Naive thymus-derived CD4-positive, alpha-beta T cell (primary cell): ENCODE measurements at regions of chr2 and their contacts with region 1.

Region 1: GRCh38 chr2:203814661-203815540 is 52.7 kb upstream of the CTLA4 start:
- DNase-seq: peak in 7 of 9 donors; percentile 59 to 80 (median 68)
- ATAC-seq: peak; percentile 87
- H3K4me3 ChIP-seq: peak overlapping the region; percentile 24
- H3K4me3 Mint-ChIP-seq: peak overlapping the region; percentile 55 to 90 (median 80)
- H3K27ac ChIP-seq: no peak overlapping the region
- H3K27ac Mint-ChIP-seq: peak overlapping the region; percentile 16 to 92 (median 74)
- H3K4me1 ChIP-seq: peaks cover 23 to 30% of the 10 kb centered on the region in 2 donors
- H3K4me1 Mint-ChIP-seq: peaks cover 27 to 55% (median 52%) of the 10 kb centered on the region in 7 donors
- H3K27me3 ChIP-seq: no peaks in the 10 kb centered on the region
- H3K27me3 Mint-ChIP-seq: peaks cover 0 to 6% (median 0%) of the 10 kb centered on the region in 5 donors

Region 2: DNA sequence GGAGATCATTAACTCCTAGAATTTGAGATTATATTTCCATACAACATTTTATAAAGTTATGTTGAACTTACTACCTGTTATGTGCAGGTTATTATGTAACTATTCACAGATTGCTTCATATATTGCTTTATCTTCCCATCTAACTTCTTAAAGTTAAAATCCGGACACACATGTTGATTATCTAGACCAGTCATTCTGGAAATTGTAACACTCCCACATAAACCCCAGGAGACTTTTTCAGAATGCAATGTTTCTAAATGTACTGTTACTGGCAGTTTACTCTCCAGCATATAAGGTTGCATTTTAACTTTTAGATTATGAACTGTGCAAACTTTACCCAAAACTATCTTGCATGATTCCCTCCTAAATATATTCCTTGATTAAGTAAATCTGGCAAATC is 1250.7 kb before region 1 on chr2:
- CTCF ChIA-PET with region 1: no interaction called
- POLR2A ChIA-PET with region 1: no interaction called
- intact Hi-C with region 1: no loop called
- DNase-seq: no peak
- ATAC-seq: no peak
- H3K4me3 ChIP-seq: no peak overlapping the region
- H3K4me3 Mint-ChIP-seq: no peak overlapping the region
- H3K27ac ChIP-seq: no peak overlapping the region
- H3K27ac Mint-ChIP-seq: no peak overlapping the region
- H3K4me1 ChIP-seq: no peaks in the 10 kb centered on the region
- H3K4me1 Mint-ChIP-seq: no peaks in the 10 kb centered on the region
- H3K27me3 ChIP-seq: no peaks in the 10 kb centered on the region
- H3K27me3 Mint-ChIP-seq: no peaks in the 10 kb centered on the region

Region 3: DNA sequence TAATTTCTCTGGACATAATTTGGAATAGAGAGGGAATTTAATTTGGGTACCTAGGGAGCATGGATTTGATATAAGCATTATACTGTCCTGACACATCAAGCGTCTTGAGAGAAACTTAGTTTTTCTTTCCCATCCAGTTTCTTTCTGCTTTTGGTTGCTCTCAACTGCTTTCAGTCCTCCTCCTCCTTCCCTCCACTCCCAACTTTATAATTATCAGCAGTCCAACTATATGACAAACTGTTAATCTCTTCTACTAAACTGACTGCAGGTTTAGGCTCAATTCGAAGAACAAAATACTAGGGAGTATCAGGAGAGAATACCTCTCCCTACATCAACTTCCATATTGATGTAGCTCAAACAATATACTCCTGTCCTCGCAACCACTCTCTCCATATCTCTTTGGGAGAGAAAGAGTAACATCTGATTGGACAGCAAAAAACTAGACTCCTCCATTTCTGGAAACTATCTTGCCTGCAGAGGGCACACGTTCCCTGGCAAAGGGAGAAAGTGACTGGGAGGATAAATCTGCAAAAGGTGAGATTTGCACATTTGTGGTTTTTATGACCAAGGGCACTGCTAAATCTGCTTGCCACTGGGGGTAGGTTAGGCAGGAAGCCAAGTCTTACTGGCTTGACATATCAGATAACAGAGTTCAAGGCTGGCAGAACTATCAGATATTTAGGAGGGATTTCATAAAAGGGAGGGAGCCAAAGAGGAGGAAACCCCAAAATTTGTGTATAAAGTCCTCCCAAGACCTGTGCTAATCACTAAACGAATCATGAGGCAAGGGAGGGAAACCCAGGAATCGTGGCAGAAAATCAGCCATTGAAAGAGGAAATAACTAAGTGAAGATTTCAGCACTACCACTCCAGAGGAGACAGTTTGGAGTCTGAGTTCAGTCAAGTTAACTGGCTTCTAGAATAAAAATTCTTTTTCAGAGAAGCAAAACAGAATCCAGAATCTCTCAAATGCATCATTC is 983.4 kb before region 1 on chr2:
- CTCF ChIA-PET with region 1: no interaction called
- POLR2A ChIA-PET with region 1: no interaction called
- intact Hi-C with region 1: loop called (anchors 5 to 10 kb)
- DNase-seq: peak in 8 of 9 donors; percentile 10 to 56 (median 46)
- ATAC-seq: peak; percentile 80
- H3K4me3 ChIP-seq: no peak overlapping the region
- H3K4me3 Mint-ChIP-seq: peak overlapping the region in 8 of 10 donors; percentile 11 to 71 (median 38)
- H3K27ac ChIP-seq: no peak overlapping the region
- H3K27ac Mint-ChIP-seq: peak overlapping the region in 4 of 9 donors; percentile 14 to 75 (median 63)
- H3K4me1 ChIP-seq: peaks cover 0 to 9% of the 10 kb centered on the region in 2 donors
- H3K4me1 Mint-ChIP-seq: peaks cover 6 to 17% (median 10%) of the 10 kb centered on the region in 7 donors
- H3K27me3 ChIP-seq: no peaks in the 10 kb centered on the region
- H3K27me3 Mint-ChIP-seq: no peaks in the 10 kb centered on the region

Region 4: DNA sequence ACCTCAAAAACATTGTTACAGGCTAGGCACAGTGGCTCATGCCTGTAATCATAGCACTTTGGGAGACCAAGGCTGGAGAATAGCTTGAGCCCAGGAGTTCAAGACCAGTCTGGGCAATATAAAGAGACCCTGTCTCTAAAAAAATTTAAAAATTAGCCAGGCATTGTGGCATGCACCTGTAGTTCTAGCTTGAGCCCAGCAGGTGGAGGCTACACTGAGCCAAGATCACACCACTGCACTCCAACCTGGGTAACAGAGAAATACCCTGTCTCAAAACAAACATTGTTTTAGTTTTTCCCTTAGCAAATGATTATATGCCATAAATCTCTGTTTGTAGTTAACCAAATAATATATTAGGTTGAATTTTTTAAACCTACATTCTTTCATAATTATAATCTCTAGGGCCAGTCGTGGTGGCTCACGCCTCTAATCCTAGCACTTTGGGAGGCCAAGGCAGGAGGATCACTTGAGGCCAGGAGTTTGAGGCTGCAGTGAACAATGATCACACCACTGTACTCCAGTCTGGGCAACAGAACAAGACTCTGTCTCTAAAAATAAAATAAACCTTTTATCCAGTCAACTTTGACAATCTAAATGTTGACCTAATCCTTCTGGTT is 589.4 kb before region 1 on chr2:
- CTCF ChIA-PET with region 1: interaction called, 18 read pairs
- POLR2A ChIA-PET with region 1: no interaction called
- intact Hi-C with region 1: loop called (anchors 1 kb)
- DNase-seq: peak in 6 of 9 donors; percentile 2 to 41 (median 36)
- ATAC-seq: peak; percentile 85
- H3K4me3 ChIP-seq: no peak overlapping the region
- H3K4me3 Mint-ChIP-seq: no peak overlapping the region
- H3K27ac ChIP-seq: no peak overlapping the region
- H3K27ac Mint-ChIP-seq: no peak overlapping the region
- H3K4me1 ChIP-seq: no peaks in the 10 kb centered on the region
- H3K4me1 Mint-ChIP-seq: no peaks in the 10 kb centered on the region
- H3K27me3 ChIP-seq: no peaks in the 10 kb centered on the region
- H3K27me3 Mint-ChIP-seq: no peaks in the 10 kb centered on the region

Region 5: GRCh38 chr2:203535078-203535783 is 279.7 kb before region 1 on chr2 and contains the start of gene RAPH1:
- CTCF ChIA-PET with region 1: no interaction called
- POLR2A ChIA-PET with region 1: interaction called, 4 read pairs
- intact Hi-C with region 1: loop called in 1 of 2 experiments (anchors 1 kb)
- DNase-seq: peak; percentile 24 to 72 (median 51)
- ATAC-seq: peak; percentile 77
- H3K4me3 ChIP-seq: peak within 1 kb of the TSS; percentile 71
- H3K4me3 Mint-ChIP-seq: peak within 1 kb of the TSS; percentile 79 to 95 (median 90)
- H3K27ac ChIP-seq: peak within 1 kb of the TSS; percentile 49
- H3K27ac Mint-ChIP-seq: peak within 1 kb of the TSS; percentile 32 to 90 (median 73)
- H3K4me1 ChIP-seq: peaks cover 10 to 15% of the 10 kb centered on the region in 2 donors
- H3K4me1 Mint-ChIP-seq: peaks cover 16 to 30% (median 28%) of the 10 kb centered on the region in 7 donors
- H3K27me3 ChIP-seq: no peaks in the 10 kb centered on the region
- H3K27me3 Mint-ChIP-seq: peaks cover 6 to 75% (median 16%) of the 10 kb centered on the region in 5 donors
- total RNA-seq, gene RAPH1: 1.8 to 5.5 (median 3.0) TPM

Region 6: GRCh38 chr2:203706403-203706802 is 108.5 kb before region 1 on chr2 and contains the start of gene CD28:
- CTCF ChIA-PET with region 1: interaction called, 7 read pairs
- POLR2A ChIA-PET with region 1: interaction called, 13 read pairs
- intact Hi-C with region 1: loop called in 1 of 2 experiments (anchors 1 kb)
- DNase-seq: peak; percentile 59 to 96 (median 94)
- ATAC-seq: peak; percentile 90
- H3K4me3 ChIP-seq: peak within 1 kb of the TSS; percentile 70
- H3K4me3 Mint-ChIP-seq: peak within 1 kb of the TSS; percentile 82 to 97 (median 94)
- H3K27ac ChIP-seq: peak within 1 kb of the TSS; percentile 95
- H3K27ac Mint-ChIP-seq: peak within 1 kb of the TSS; percentile 92 to 99 (median 97)
- H3K4me1 ChIP-seq: peaks cover 30 to 39% of the 10 kb centered on the region in 2 donors
- H3K4me1 Mint-ChIP-seq: peaks cover 13 to 50% (median 41%) of the 10 kb centered on the region in 7 donors
- H3K27me3 ChIP-seq: no peaks in the 10 kb centered on the region
- H3K27me3 Mint-ChIP-seq: no peaks in the 10 kb centered on the region
- total RNA-seq, gene CD28: 66.7 to 224 (median 121) TPM

Region 7: GRCh38 chr2:203804070-203804469 is 10.8 kb before region 1 on chr2:
- CTCF ChIA-PET with region 1: interaction called, 16 read pairs
- POLR2A ChIA-PET with region 1: interaction called, 9 read pairs
- intact Hi-C with region 1: no loop called
- DNase-seq: peak in 8 of 9 donors; percentile 27 to 57 (median 42)
- ATAC-seq: peak; percentile 75
- H3K4me3 ChIP-seq: peak overlapping the region; percentile 12
- H3K4me3 Mint-ChIP-seq: peak overlapping the region; percentile 23 to 80 (median 63)
- H3K27ac ChIP-seq: peak overlapping the region; percentile 47
- H3K27ac Mint-ChIP-seq: peak overlapping the region; percentile 1 to 83 (median 76)
- H3K4me1 ChIP-seq: peaks cover 28 to 34% of the 10 kb centered on the region in 2 donors
- H3K4me1 Mint-ChIP-seq: peaks cover 27 to 83% (median 72%) of the 10 kb centered on the region in 7 donors
- H3K27me3 ChIP-seq: no peaks in the 10 kb centered on the region
- H3K27me3 Mint-ChIP-seq: peaks cover 0 to 3% (median 0%) of the 10 kb centered on the region in 5 donors